ENCODE measurements at regions of chr9 and their contacts with region 1.

Region 1: DNA sequence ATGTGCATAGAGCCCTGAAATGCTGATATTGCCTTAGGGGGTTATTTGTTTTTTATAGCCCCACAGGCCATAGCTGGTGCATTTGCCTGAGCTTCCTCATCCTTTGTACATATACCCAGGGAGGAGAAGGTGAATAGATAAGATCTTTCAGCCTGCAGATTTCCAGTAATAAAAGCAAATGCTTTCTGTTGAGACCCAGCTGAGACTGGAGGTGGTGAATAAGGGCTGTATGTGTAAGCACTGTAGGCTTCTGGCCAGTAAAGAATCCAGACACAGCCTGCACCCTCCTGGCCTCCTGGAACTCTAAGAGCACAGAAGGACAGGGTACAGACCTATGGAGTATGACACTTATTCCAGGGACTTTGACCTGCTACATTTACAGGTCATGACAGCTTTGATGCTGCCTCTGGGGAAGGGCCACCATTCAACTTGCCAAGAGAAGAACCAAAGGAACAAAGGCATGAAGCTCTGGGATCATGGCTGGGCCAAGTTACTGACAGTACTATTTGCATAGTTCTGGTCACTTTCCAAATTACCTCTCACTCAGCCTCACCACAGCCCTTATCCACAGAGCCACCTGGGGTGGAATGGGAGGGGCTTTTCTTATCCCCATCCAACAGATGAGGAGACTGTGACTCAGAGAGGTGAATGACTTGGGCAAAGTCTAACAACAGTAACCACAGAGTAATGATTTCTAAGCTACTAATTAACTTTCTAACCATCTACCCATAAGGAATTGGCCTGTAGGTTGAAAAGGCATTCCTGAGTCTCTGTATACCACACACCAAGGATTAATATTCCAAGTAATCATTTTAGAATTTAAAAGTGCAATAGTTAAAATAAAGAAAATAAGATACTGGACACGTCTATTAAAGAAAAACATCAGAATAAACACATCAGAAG is 604.5 kb upstream of the KLF4 start:
- DNase-seq: no peak
- H3K4me3 ChIP-seq: no peak overlapping the region
- H3K27ac ChIP-seq: no peak overlapping the region
- H3K4me1 ChIP-seq: no peaks in the 10 kb centered on the region
- H3K27me3 ChIP-seq: no peaks in the 10 kb centered on the region
- CTCF ChIP-seq: no peak
- POLR2A ChIP-seq: no peak

Region 2: DNA sequence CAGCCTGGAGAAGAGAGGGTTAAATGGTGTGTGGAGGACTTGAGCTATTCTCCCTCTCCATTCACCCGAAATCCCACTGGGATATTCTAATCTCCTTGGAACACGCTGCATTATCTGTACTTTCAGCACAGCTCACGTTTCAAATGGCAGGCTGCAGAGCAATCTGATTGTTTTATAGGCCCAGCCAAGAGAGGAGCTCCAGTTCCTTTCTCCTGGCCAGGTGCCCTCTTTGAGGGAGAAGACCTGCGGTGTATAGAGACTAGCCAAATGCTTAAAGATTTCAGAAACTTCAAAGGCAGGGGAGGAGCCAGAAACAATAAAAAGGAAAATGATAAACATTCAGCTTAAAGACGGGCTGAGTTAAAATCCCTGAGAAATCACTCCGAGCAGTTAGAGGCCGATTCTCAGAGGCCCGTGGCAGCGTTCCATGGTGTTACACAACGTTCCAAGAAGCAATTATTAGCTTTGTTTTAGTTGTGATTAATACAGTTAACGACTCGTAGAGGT is 40.4 kb before region 1 on chr9:
- intact Hi-C with region 1: no loop called
- DNase-seq: peak; percentile 20 to 42
- H3K4me3 ChIP-seq: no peak overlapping the region
- H3K27ac ChIP-seq: no peak overlapping the region
- H3K4me1 ChIP-seq: no peaks in the 10 kb centered on the region
- H3K27me3 ChIP-seq: no peaks in the 10 kb centered on the region
- CTCF ChIP-seq: no peak
- POLR2A ChIP-seq: no peak

Region 3: DNA sequence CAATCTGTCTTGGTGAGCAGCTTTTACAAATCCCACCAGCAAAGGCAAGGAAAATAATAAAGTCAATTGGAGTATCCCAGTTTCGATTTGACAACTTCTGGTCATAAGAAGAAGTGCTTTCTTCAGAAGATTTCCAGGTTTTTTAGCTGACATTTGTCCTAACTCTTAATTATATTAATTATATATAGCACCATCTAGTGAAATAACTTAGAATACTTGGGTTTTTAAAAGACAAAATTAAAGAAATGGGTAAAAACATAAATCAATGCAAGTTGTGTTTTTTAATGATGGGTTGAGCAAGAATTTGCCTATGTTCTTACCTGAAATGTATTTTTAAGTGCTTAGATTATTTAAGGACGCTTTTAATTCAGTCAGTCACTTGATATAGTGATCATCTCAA is 340.0 kb after region 1 on chr9:
- intact Hi-C with region 1: loop called (anchors 5 kb)
- DNase-seq: no peak
- H3K4me3 ChIP-seq: no peak overlapping the region
- H3K27ac ChIP-seq: no peak overlapping the region
- H3K4me1 ChIP-seq: no peaks in the 10 kb centered on the region
- H3K27me3 ChIP-seq: no peaks in the 10 kb centered on the region
- CTCF ChIP-seq: no peak
- POLR2A ChIP-seq: no peak

Measured in thyroid gland (tissue), 4 donors.